ENCODE measurements at regions of chr10 and their contacts with region 1.

Region 1: DNA sequence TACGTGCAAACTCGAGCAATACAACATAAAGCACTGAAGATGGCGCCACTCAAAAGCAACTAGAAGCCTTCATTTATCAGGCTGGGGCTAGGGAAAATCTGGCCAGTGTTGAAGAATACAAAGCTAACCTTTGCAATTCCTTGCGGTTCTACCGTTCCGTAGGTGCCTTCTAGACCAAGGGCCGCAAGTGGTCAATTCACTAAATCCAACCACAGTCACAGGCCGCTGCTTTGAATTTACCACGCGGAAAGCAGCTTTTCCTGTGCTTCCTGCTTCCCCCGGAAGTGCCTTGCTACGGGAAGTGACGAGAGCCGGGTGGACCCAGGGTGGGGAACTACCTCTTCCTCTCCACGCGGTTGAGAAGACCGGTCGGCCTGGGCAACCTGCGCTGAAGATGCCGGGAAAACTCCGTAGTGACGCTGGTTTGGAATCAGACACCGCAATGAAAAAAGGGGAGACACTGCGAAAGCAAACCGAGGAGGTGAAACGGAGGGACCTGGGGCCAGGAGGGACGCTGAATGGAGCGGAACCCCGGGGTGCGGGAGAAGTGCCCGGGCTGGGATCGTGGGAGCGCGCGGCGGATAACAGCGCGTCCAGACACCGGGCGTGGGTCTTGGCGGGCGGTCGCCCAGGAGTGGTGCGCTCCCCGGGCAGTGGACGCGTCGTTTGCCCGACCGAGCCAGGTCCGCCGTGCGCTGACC is at the start of gene DDX21:
- DNase-seq: peak; percentile 93
- H3K4me3 Mint-ChIP-seq: peak within 1 kb of the TSS; percentile 100
- H3K27ac Mint-ChIP-seq: peak within 1 kb of the TSS; percentile 100
- H3K4me1 Mint-ChIP-seq: peaks cover 8% of the 10 kb centered on the region
- H3K27me3 Mint-ChIP-seq: no peaks in the 10 kb centered on the region
- CTCF ChIP-seq: peak; percentile 41
- total RNA-seq, gene DDX21: 144 and 216 TPM in 2 replicates

Region 2: DNA sequence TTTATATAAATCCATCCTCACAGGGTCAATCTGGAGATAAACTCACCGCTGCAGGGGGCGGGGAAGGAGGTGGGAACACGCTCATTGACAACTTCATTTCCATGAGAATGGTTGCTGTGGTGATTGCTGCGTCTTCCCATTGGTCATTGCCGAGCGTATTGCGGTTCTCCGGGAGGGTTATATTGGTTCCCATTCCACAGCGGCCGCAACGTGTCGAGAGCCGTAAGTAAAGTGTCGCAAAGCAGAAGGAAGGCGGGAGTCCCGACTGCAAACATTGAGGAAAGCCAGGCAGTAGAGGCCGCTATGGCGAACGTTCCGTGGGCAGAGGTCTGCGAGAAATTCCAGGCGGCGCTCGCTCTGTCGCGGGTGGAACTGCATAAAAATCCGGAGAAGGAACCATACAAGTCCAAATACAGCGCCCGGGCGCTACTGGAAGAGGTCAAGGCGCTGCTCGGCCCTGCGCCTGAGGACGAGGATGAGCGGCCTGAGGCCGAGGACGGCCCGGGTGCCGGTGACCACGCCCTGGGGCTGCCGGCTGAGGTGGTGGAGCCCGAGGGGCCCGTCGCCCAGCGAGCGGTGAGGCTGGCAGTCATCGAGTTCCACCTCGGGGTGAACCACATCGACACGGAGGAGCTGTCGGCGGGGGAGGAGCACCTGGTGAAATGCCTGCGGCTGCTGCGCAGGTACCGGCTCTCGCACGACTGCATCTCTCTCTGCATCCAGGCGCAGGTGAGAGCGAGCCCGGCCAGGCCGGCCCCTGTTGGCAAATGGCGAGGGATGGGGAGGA is 32.7 kb after region 1 on chr10 and contains the start of gene KIFBP:
- CTCF ChIA-PET with region 1: interaction called, 3 read pairs
- POLR2A ChIA-PET with region 1: interaction called, 38 read pairs
- intact Hi-C with region 1: no loop called
- DNase-seq: peak; percentile 98
- H3K4me3 Mint-ChIP-seq: peak within 1 kb of the TSS; percentile 98
- H3K27ac Mint-ChIP-seq: peak within 1 kb of the TSS; percentile 97
- H3K4me1 Mint-ChIP-seq: peaks cover 24% of the 10 kb centered on the region
- H3K27me3 Mint-ChIP-seq: no peaks in the 10 kb centered on the region
- CTCF ChIP-seq: peak; percentile 26
- total RNA-seq, gene KIFBP: 20.9 and 23.2 TPM in 2 replicates

Region 3: GRCh38 chr10:69051303-69051702 is 95.3 kb after region 1 on chr10:
- CTCF ChIA-PET with region 1: no interaction called
- POLR2A ChIA-PET with region 1: no interaction called
- intact Hi-C with region 1: no loop called
- DNase-seq: no peak
- H3K4me3 Mint-ChIP-seq: no peak overlapping the region
- H3K27ac Mint-ChIP-seq: no peak overlapping the region
- H3K4me1 Mint-ChIP-seq: no peaks in the 10 kb centered on the region
- H3K27me3 Mint-ChIP-seq: no peaks in the 10 kb centered on the region
- CTCF ChIP-seq: no peak